ENCODE measurements at regions of chr5 and their contacts with region 1.

Region 1: GRCh38 chr5:18465833-18466591 is 831.8 kb downstream of the TAF11L14 start:
- DNase-seq: peak in 7 of 10 donors; percentile 38 to 84 (median 62)

Region 2: GRCh38 chr5:18699681-18700080 is 233.7 kb after region 1 on chr5:
- intact Hi-C with region 1: loop called (anchors 5 kb)
- DNase-seq: no peak

Region 3: DNA sequence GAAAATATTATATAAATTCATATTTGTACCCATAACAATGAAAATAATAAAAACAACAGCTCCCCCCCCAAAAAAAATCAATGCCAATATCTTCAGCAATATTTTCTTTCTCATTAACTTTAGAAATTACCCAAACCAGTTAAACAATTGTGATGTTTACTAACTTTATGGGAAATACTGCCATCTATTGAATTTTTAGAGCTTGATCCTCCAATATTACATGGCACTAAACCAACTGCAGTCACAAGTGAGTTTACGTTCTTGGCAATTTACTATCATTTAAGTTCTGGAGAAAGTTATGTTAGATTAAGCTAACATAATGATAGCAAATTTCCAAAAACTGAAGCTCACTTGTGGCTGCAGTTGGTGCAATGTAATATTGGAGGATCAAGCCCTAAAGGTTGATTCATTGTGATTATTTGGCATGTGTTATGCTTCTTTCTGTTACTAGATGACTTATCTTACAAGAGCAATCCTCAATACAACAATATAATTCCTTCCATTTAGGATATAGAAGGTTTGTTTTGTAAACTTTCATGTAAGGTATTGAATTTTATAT is 1142.5 kb after region 1 on chr5:
- intact Hi-C with region 1: loop called (anchors 5 kb)
- DNase-seq: no peak